ENCODE measurements at regions of chr3 and their contacts with region 1.

Region 1: GRCh38 chr3:52339612-52340011 is 23.5 kb downstream of the DNAH1 start:
- DNase-seq: peak in 8 of 9 experiments; percentile 16 to 85 (median 54)
- ATAC-seq: peak; percentile 90
- H3K4me3 ChIP-seq: no peak overlapping the region
- H3K4me3 Mint-ChIP-seq: no peak overlapping the region
- H3K27ac ChIP-seq: no peak overlapping the region
- H3K27ac Mint-ChIP-seq: no peak overlapping the region
- H3K4me1 ChIP-seq: no peaks in the 10 kb centered on the region
- H3K4me1 Mint-ChIP-seq: peaks cover 5% of the 10 kb centered on the region
- H3K27me3 ChIP-seq: no peaks in the 10 kb centered on the region
- H3K27me3 Mint-ChIP-seq: no peaks in the 10 kb centered on the region
- CTCF ChIP-seq: peak; percentile 93

Region 2: GRCh38 chr3:52154117-52155094 is 185.2 kb before region 1 on chr3 and contains the start of gene POC1A:
- CTCF ChIA-PET with region 1: interaction called, 15 read pairs
- POLR2A ChIA-PET with region 1: no interaction called
- intact Hi-C with region 1: no loop called
- DNase-seq: peak; percentile 61 to 91 (median 83)
- ATAC-seq: peak; percentile 85
- H3K4me3 ChIP-seq: peak within 1 kb of the TSS; percentile 98 to 99
- H3K4me3 Mint-ChIP-seq: peak within 1 kb of the TSS; percentile 96
- H3K27ac ChIP-seq: peak within 1 kb of the TSS; percentile 71 to 91
- H3K27ac Mint-ChIP-seq: peak within 1 kb of the TSS; percentile 96
- H3K4me1 ChIP-seq: peaks cover 7% of the 10 kb centered on the region
- H3K4me1 Mint-ChIP-seq: peaks cover 10% of the 10 kb centered on the region
- H3K27me3 ChIP-seq: no peaks in the 10 kb centered on the region
- H3K27me3 Mint-ChIP-seq: no peaks in the 10 kb centered on the region
- CTCF ChIP-seq: no peak
- total RNA-seq, gene POC1A: 0.24 to 0.42 TPM

Region 3: GRCh38 chr3:52238761-52239701 is 100.6 kb before region 1 on chr3 and contains the start of gene TWF2:
- CTCF ChIA-PET with region 1: interaction called, 77 read pairs
- POLR2A ChIA-PET with region 1: no interaction called
- intact Hi-C with region 1: no loop called
- DNase-seq: peak; percentile 67 to 95 (median 88)
- ATAC-seq: peak; percentile 83
- H3K4me3 ChIP-seq: peak within 1 kb of the TSS; percentile 79 to 95
- H3K4me3 Mint-ChIP-seq: peak within 1 kb of the TSS; percentile 98
- H3K27ac ChIP-seq: peak within 1 kb of the TSS; percentile 85 to 95
- H3K27ac Mint-ChIP-seq: peak within 1 kb of the TSS; percentile 98
- H3K4me1 ChIP-seq: peaks cover 77% of the 10 kb centered on the region
- H3K4me1 Mint-ChIP-seq: peaks cover 76% of the 10 kb centered on the region
- H3K27me3 ChIP-seq: no peaks in the 10 kb centered on the region
- H3K27me3 Mint-ChIP-seq: no peaks in the 10 kb centered on the region
- CTCF ChIP-seq: peak; percentile 58
- total RNA-seq, gene TWF2: 31.1 to 31.2 TPM

Region 4: DNA sequence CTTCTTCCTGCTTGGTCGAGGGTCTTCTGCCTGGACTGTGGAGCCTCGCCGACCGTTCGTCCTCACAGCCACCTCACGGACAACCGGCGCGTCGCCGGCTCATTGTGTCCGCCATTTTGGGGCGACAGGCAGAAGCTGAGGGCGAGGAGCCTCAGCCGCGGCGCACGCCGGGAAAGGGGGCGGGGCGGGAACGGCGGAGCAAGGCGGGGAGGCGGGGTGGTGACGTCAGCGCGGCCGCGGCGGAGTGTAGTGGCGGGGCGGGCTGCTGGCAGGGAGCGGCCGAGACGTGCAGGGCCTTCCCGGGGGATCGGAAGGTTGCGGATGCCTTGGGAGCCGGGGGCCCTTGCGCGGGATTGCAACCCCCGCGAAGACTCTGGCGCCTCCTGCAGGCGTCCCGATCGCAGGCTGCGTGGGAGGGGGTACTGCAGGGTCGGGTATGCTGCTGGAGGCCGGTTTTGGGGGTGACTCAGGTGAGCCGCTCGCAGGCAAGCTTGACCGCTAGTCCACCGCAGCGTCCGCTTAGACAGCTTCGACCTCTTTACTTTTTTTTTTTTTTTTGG is 61.0 kb before region 1 on chr3 and contains the start of gene WDR82:
- CTCF ChIA-PET with region 1: interaction called, 29 read pairs
- POLR2A ChIA-PET with region 1: interaction called, 11 read pairs
- intact Hi-C with region 1: loop called in 1 of 2 experiments (anchors 10 kb)
- DNase-seq: peak; percentile 94 to 99 (median 98)
- ATAC-seq: peak; percentile 77
- H3K4me3 ChIP-seq: peak within 1 kb of the TSS; percentile 65 to 95
- H3K4me3 Mint-ChIP-seq: peak within 1 kb of the TSS; percentile 94
- H3K27ac ChIP-seq: peak within 1 kb of the TSS; percentile 79 to 93
- H3K27ac Mint-ChIP-seq: peak within 1 kb of the TSS; percentile 99
- H3K4me1 ChIP-seq: peaks cover 49% of the 10 kb centered on the region
- H3K4me1 Mint-ChIP-seq: peaks cover 72% of the 10 kb centered on the region
- H3K27me3 ChIP-seq: no peaks in the 10 kb centered on the region
- H3K27me3 Mint-ChIP-seq: no peaks in the 10 kb centered on the region
- CTCF ChIP-seq: peak; percentile 36
- total RNA-seq, gene WDR82: 115 to 117 TPM

Region 5: DNA sequence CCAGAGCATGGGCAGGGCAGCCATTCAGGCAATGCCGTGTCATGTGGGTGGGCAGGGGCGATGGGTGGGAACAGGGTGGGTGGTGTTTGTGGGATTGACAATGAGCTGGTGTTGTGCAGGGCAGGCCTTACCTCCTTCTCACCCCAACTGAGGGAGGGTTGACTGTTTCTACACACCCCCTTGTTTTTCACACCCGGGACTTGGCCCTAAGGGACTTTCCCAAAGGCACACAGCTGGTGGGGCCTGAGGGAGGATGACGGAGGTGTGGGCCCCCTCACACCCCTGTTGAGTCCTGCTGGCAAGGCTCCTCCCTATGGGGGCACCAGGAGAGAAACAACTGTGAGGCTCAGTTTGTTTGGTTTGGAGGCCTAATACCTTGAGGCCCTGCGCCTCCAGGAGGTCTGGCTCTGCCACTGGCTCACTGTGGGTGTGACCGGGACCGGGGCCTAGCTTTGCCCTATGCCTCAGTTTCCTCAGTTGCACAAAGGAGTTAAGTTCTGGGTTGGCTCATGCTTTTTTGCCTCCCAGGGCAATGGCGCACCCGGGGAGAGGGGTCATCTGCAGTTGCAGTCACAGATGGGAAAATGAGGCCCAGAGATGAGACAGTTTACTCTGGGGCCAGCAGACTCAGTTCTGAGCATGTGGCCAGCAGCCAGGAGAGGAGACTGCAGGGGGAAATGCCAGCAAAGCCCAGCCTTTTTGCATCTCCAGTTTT is 28.6 kb before region 1 on chr3:
- CTCF ChIA-PET with region 1: interaction called, 21 read pairs
- POLR2A ChIA-PET with region 1: no interaction called
- intact Hi-C with region 1: no loop called
- DNase-seq: peak; percentile 15 to 91 (median 49)
- ATAC-seq: peak; percentile 93
- H3K4me3 ChIP-seq: no peak overlapping the region
- H3K4me3 Mint-ChIP-seq: no peak overlapping the region
- H3K27ac ChIP-seq: peak overlapping the region; percentile 38 to 71
- H3K27ac Mint-ChIP-seq: peak overlapping the region; percentile 64
- H3K4me1 ChIP-seq: peaks cover 28% of the 10 kb centered on the region
- H3K4me1 Mint-ChIP-seq: peaks cover 39% of the 10 kb centered on the region
- H3K27me3 ChIP-seq: no peaks in the 10 kb centered on the region
- H3K27me3 Mint-ChIP-seq: no peaks in the 10 kb centered on the region
- CTCF ChIP-seq: no peak